Naive thymus-derived CD4-positive, alpha-beta T cell (primary cell): ENCODE measurements at regions of chr11 and their contacts with region 1.

Region 1: GRCh38 chr11:59560702-59561469 is 49.5 kb downstream of the OR4D9 start:
- DNase-seq: peak; percentile 59 to 82 (median 78)
- ATAC-seq: peak; percentile 85
- H3K4me3 ChIP-seq: peak overlapping the region; percentile 98
- H3K4me3 Mint-ChIP-seq: peak overlapping the region; percentile 81 to 99 (median 96)
- H3K27ac ChIP-seq: peak overlapping the region; percentile 72
- H3K27ac Mint-ChIP-seq: peak overlapping the region; percentile 87 to 99 (median 96)
- H3K4me1 ChIP-seq: peaks cover 20 to 26% of the 10 kb centered on the region in 2 donors
- H3K4me1 Mint-ChIP-seq: peaks cover 27 to 63% (median 51%) of the 10 kb centered on the region in 7 donors
- H3K27me3 ChIP-seq: no peaks in the 10 kb centered on the region
- H3K27me3 Mint-ChIP-seq: peaks cover 0 to 14% (median 0%) of the 10 kb centered on the region in 5 donors

Region 2: GRCh38 chr11:59542142-59542810 is 18.6 kb before region 1 on chr11:
- CTCF ChIA-PET with region 1: interaction called, 6 read pairs
- POLR2A ChIA-PET with region 1: interaction called, 5 read pairs
- intact Hi-C with region 1: loop called in 1 of 2 experiments (anchors 1 kb)
- DNase-seq: no peak
- ATAC-seq: no peak
- H3K4me3 ChIP-seq: no peak overlapping the region
- H3K4me3 Mint-ChIP-seq: no peak overlapping the region
- H3K27ac ChIP-seq: no peak overlapping the region
- H3K27ac Mint-ChIP-seq: no peak overlapping the region
- H3K4me1 ChIP-seq: no peaks in the 10 kb centered on the region
- H3K4me1 Mint-ChIP-seq: peaks cover 7 to 9% (median 8%) of the 10 kb centered on the region in 7 donors
- H3K27me3 ChIP-seq: no peaks in the 10 kb centered on the region
- H3K27me3 Mint-ChIP-seq: peaks cover 0 to 6% (median 0%) of the 10 kb centered on the region in 5 donors

Region 3: GRCh38 chr11:59550368-59550841 is 10.5 kb before region 1 on chr11:
- CTCF ChIA-PET with region 1: interaction called, 5 read pairs
- POLR2A ChIA-PET with region 1: interaction called, 32 read pairs
- intact Hi-C with region 1: loop called (anchors 1 kb)
- DNase-seq: peak; percentile 67 to 95 (median 89)
- ATAC-seq: peak; percentile 92
- H3K4me3 ChIP-seq: peak overlapping the region; percentile 59
- H3K4me3 Mint-ChIP-seq: peak overlapping the region; percentile 70 to 98 (median 92)
- H3K27ac ChIP-seq: peak overlapping the region; percentile 66
- H3K27ac Mint-ChIP-seq: peak overlapping the region; percentile 89 to 100 (median 98)
- H3K4me1 ChIP-seq: peaks cover under 1 to 4% of the 10 kb centered on the region in 2 donors
- H3K4me1 Mint-ChIP-seq: peaks cover 0 to 40% (median 32%) of the 10 kb centered on the region in 7 donors
- H3K27me3 ChIP-seq: no peaks in the 10 kb centered on the region
- H3K27me3 Mint-ChIP-seq: peaks cover 0 to 28% (median 0%) of the 10 kb centered on the region in 5 donors

Region 4: DNA sequence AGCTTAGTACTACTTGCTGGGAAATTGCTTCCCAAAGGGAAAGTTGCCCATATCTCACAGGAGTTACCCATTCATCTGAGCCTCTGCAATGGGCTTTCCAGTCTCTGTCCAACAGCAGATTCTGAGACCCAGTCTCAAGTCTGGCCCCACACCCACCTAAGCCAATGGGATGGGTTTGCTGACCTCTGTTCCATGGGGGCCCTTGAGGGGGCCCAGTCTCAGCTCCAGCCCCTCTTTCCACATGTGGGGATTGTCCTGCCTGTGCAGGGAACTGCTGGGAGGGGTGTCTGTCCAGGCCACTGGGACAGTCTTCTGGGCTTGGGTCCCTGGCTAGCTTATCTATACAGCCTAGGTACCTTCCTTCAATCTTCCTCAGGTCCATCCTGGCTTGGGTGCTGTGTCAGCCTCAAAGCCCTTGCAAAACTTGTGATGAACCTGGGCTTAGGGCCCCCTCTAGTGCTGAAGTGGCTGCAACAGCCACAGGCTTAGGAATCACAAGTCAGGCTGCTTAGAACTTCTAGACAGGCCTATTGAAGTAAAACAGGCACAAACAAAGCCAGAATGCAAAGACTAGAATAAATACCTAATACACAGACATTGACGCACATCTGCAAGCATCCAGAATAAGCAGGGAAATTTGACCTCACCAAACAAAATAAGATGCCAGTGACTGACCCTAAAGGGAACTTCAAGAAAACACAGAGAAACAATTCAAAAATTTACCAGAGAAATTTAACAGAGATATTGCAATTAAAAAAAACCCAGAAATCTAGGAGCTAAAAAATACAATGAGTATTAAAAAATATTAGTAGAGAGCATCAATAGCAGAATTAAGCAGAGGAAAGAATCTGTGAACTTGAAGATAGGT is 119.6 kb after region 1 on chr11:
- CTCF ChIA-PET with region 1: no interaction called
- POLR2A ChIA-PET with region 1: no interaction called
- intact Hi-C with region 1: no loop called
- DNase-seq: peak in 8 of 9 donors; percentile 43 to 66 (median 58)
- ATAC-seq: peak; percentile 97
- H3K4me3 ChIP-seq: no peak overlapping the region
- H3K4me3 Mint-ChIP-seq: no peak overlapping the region
- H3K27ac ChIP-seq: no peak overlapping the region
- H3K27ac Mint-ChIP-seq: no peak overlapping the region
- H3K4me1 ChIP-seq: no peaks in the 10 kb centered on the region
- H3K4me1 Mint-ChIP-seq: no peaks in the 10 kb centered on the region
- H3K27me3 ChIP-seq: no peaks in the 10 kb centered on the region
- H3K27me3 Mint-ChIP-seq: peaks cover 18 to 39% (median 23%) of the 10 kb centered on the region in 5 donors

Region 5: DNA sequence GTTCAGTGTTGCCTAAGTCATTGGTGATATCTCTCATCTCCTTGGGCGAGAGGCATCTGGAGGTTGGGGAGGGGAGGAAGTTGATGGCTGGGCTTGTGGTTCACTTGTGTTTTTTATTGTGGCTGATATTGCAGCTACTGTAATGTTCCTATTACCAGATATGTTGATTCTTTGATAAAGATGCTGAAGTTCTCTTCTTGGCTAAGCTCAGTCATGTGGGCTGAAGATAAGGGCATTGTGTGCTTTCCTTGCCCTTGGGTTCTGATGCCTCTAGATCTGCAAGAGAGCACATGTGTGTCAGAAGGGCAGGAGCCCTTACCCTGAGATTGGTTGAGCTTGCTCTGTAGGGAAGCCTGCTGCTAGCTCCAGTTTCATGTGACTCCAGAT is 206.3 kb after region 1 on chr11:
- CTCF ChIA-PET with region 1: no interaction called
- POLR2A ChIA-PET with region 1: no interaction called
- intact Hi-C with region 1: no loop called
- DNase-seq: peak in 6 of 9 donors; percentile 10 to 55 (median 40)
- ATAC-seq: peak; percentile 80
- H3K4me3 ChIP-seq: peak overlapping the region; percentile 32
- H3K4me3 Mint-ChIP-seq: peak overlapping the region in 5 of 10 donors; percentile 27 to 67 (median 58)
- H3K27ac ChIP-seq: no peak overlapping the region
- H3K27ac Mint-ChIP-seq: peak overlapping the region in 3 of 9 donors; percentile 24 to 81 (median 49)
- H3K4me1 ChIP-seq: peaks cover 31 to 45% of the 10 kb centered on the region in 2 donors
- H3K4me1 Mint-ChIP-seq: peaks cover 7 to 33% (median 27%) of the 10 kb centered on the region in 7 donors
- H3K27me3 ChIP-seq: no peaks in the 10 kb centered on the region
- H3K27me3 Mint-ChIP-seq: peaks cover 0 to 4% (median 0%) of the 10 kb centered on the region in 5 donors